Esophagus squamous epithelium (tissue), 5 donors: ENCODE measurements at regions of chr1 and their contacts with region 1.

Region 1: DNA sequence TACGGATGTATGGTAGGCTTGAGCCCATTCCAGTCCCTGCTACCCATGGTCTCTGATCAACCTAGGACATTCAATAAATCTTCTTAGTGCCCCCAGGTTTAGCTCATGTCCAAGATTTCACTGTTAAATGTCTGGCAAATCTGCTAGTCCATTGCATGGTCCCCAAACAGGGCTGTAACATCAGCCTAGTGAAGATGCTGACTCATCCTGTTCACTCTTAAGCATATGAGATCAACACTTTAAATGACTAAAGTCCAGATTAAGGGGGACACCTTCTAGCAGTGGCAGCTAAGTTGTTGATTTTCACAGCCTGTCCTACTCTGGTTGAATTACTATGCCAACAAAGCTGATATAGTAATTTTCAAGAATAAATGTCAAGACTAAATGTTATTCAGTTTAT is 46.5 kb upstream of the NUF2 start:
- DNase-seq: no peak
- H3K4me3 ChIP-seq: no peak overlapping the region
- H3K27ac ChIP-seq: no peak overlapping the region
- H3K4me1 ChIP-seq: no peaks in the 10 kb centered on the region
- H3K27me3 ChIP-seq: no peaks in the 10 kb centered on the region
- CTCF ChIP-seq: no peak
- POLR2A ChIP-seq: no peak

Region 2: GRCh38 chr1:163213626-163214025 is 61.6 kb before region 1 on chr1:
- intact Hi-C with region 1: loop called (anchors 10 kb)
- DNase-seq: no peak
- H3K4me3 ChIP-seq: no peak overlapping the region
- H3K27ac ChIP-seq: peak overlapping the region in 1 of 4 donors; percentile 26
- H3K4me1 ChIP-seq: no peaks in the 10 kb centered on the region
- H3K27me3 ChIP-seq: no peaks in the 10 kb centered on the region
- CTCF ChIP-seq: no peak
- POLR2A ChIP-seq: no peak